Panc1 (cell line): ENCODE measurements at regions of chr1 and their contacts with region 1.

Region 1: DNA sequence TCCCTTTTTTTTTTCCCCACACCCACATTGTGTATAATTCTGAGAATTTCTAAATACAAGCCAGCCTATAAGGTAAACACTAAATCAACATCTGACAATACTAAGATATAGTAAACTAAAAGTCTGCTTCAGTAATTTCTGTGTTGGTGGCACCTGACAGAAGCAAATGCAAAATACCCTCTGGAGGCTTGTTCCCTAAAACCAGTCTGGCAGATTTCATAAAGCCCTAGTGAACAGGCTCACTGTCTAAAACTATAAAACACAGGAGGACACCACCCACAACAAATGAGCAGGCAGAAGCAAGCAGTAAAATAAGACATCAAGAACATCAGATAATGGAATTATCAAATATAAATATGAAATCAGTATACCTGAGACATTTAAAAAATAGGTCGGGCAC is 11.5 kb downstream of the TRIM33 start:
- DNase-seq: no peak
- ATAC-seq: no peak
- H3K4me3 ChIP-seq: no peak overlapping the region
- H3K27ac ChIP-seq: no peak overlapping the region
- H3K4me1 ChIP-seq: no peaks in the 10 kb centered on the region; the same call in 1 of the 2 replicates
- H3K27me3 ChIP-seq: no peaks in the 10 kb centered on the region
- CTCF ChIP-seq: no peak

Region 2: GRCh38 chr1:114446198-114446597 is 53.3 kb before region 1 on chr1:
- CTCF ChIA-PET with region 1: no interaction called
- POLR2A ChIA-PET with region 1: no interaction called
- in situ Hi-C with region 1: no loop called
- intact Hi-C with region 1: loop called (anchors 2 kb)
- DNase-seq: no peak
- ATAC-seq: no peak
- H3K4me3 ChIP-seq: no peak overlapping the region
- H3K27ac ChIP-seq: no peak overlapping the region
- H3K4me1 ChIP-seq: no peaks in the 10 kb centered on the region
- H3K27me3 ChIP-seq: no peaks in the 10 kb centered on the region
- CTCF ChIP-seq: no peak

Region 3: GRCh38 chr1:115426231-115426771 is 926.8 kb after region 1 on chr1:
- CTCF ChIA-PET with region 1: no interaction called
- POLR2A ChIA-PET with region 1: no interaction called
- in situ Hi-C with region 1: no loop called
- intact Hi-C with region 1: no loop called
- DNase-seq: no peak
- ATAC-seq: no peak
- H3K4me3 ChIP-seq: no peak overlapping the region
- H3K27ac ChIP-seq: no peak overlapping the region
- H3K4me1 ChIP-seq: no peaks in the 10 kb centered on the region
- H3K27me3 ChIP-seq: 0 out of 2 replicates have a peak, but pooled peaks cover 2% of the 10 kb centered on the region
- CTCF ChIP-seq: no peak